ENCODE measurements at regions of chr11 and their contacts with region 1.

Region 1: DNA sequence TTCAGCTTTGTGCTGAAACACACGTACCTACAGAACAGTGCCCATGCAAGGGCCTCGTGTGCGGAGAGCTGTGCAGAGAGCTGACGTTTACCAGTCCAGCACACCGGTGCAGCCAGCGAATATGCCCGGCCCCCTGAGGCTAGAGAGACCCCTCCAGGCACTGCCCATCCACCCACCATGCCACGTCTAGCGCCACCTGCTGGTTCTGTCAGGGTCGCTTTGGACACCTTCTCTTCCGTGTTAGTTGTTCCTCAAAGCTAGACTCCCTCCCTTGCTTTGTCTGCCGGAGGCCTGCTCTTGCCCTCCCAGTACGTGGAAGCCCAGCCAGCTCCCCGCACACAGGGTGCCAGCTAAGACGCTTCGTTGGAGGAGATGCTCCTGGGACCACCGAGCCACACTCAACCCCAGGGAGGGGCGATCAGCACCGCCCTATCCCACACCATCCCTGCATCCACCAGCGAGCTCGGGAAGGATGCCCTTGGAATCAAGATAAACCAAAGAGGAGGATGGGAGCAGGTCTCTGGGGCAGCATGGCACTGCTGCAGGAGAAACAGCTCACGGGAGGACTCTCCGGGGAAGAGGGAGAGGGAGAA is 43.4 kb downstream of the CPT1A start:
- DNase-seq: no peak
- H3K4me3 ChIP-seq: no peak overlapping the region
- H3K27ac ChIP-seq: no peak overlapping the region
- H3K4me1 ChIP-seq: no peaks in the 10 kb centered on the region
- H3K27me3 ChIP-seq: no peaks in the 10 kb centered on the region
- CTCF ChIP-seq: peak; percentile 84

Region 2: DNA sequence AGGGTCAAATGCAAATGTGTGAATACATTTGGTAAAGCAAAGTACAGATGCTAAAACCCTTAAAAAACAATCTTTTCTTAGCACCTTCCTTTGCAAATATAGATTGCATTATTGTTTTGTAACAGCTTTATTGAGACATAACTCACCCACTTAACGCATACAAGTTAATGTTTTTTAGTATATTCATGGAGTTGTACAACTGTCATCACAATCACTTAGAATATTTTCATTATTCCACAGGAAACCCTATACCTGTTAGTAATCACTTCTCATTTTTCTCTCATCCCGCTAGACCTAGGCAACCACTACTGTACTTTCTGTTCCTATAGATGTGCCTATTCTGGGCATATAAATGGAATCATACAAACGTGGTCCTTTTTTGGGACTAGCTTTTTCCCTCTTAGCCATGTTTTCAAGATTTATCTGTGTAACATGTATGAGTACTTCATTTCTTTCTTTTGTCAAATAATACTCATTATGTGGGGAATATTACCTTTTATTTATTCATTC is 303.0 kb before region 1 on chr11:
- CTCF ChIA-PET with region 1: no interaction called
- POLR2A ChIA-PET with region 1: no interaction called
- intact Hi-C with region 1: no loop called
- DNase-seq: no peak
- H3K4me3 ChIP-seq: no peak overlapping the region
- H3K27ac ChIP-seq: no peak overlapping the region
- H3K4me1 ChIP-seq: no peaks in the 10 kb centered on the region
- H3K27me3 ChIP-seq: no peaks in the 10 kb centered on the region
- CTCF ChIP-seq: no peak

Region 3: DNA sequence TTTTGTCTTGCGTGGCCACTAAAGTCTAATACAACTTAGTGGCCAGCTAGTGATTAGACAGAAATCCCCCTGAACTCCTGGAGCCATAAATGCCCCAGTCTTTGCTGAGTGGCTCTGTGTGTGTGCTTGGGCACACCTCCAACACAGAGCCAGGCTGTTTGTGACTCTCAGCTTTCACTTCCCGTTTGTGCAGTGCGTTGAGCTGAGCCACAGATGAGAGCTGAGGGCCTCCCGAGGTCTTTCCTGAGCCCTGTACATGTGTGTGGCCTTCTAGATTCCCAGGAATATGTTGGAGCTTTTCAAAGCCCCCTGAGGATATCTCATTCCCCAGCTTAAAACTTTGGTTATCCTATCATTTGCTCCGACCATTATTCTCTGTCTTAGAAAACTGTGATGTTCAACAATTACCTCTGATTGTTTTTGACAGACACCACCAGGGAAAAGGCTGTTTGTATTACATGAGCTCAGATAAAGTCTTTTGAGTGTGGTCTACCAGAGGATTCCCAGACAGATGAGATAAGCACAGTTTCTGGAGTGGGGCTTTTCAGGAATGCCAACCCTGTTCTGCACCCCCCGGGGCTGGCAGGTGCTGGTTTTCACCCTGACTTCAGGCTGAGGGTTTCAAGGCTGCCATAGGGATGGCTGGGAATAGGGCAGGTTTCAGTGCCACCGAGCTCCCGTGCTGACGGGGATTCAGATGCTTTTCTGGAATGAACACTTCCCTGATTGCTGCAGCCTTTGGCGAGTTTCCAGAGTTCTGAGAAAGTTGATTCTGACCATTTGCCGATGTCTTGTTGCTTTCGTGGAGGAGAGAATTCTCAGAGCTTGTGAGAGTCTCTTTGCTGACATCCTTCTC is 129.2 kb after region 1 on chr11:
- CTCF ChIA-PET with region 1: no interaction called
- POLR2A ChIA-PET with region 1: no interaction called
- intact Hi-C with region 1: no loop called
- DNase-seq: no peak
- H3K4me3 ChIP-seq: no peak overlapping the region
- H3K27ac ChIP-seq: no peak overlapping the region
- H3K4me1 ChIP-seq: peaks cover 5% of the 10 kb centered on the region; the same call in 1 of the 2 replicates
- H3K27me3 ChIP-seq: no peaks in the 10 kb centered on the region
- CTCF ChIP-seq: no peak

Region 4: GRCh38 chr11:69692422-69692821 is 894.1 kb after region 1 on chr11:
- CTCF ChIA-PET with region 1: interaction called, 12 read pairs
- POLR2A ChIA-PET with region 1: no interaction called
- intact Hi-C with region 1: no loop called
- DNase-seq: peak in 1 of 2 experiments; percentile 24
- H3K4me3 ChIP-seq: no peak overlapping the region
- H3K27ac ChIP-seq: peak overlapping the region; percentile 98
- H3K4me1 ChIP-seq: peaks cover 68% of the 10 kb centered on the region
- H3K27me3 ChIP-seq: no peaks in the 10 kb centered on the region
- CTCF ChIP-seq: no peak